ENCODE measurements at regions of chr17 and their contacts with region 1.

Region 1: GRCh38 chr17:50661795-50662391 is 27.2 kb downstream of the ABCC3 start:
- DNase-seq: peak; percentile 72 to 89 (median 88)
- H3K4me3 ChIP-seq: peak overlapping the region in 3 of 7 experiments; percentile 0 to 45 (median 26)
- H3K27ac ChIP-seq: peak overlapping the region in 1 of 2 experiments; percentile 52
- H3K4me1 ChIP-seq: peaks cover 0 to 48% (median 26%) of the 10 kb centered on the region in 4 experiments
- H3K27me3 ChIP-seq: no peaks in the 10 kb centered on the region

Region 2: GRCh38 chr17:50651661-50652060 is 10.2 kb before region 1 on chr17:
- CTCF ChIA-PET with region 1: interaction called, 13 read pairs
- POLR2A ChIA-PET with region 1: no interaction called
- DNase-seq: no peak
- H3K4me3 ChIP-seq: no peak overlapping the region
- H3K27ac ChIP-seq: no peak overlapping the region
- H3K4me1 ChIP-seq: no peaks in the 10 kb centered on the region
- H3K27me3 ChIP-seq: no peaks in the 10 kb centered on the region

Region 3: DNA sequence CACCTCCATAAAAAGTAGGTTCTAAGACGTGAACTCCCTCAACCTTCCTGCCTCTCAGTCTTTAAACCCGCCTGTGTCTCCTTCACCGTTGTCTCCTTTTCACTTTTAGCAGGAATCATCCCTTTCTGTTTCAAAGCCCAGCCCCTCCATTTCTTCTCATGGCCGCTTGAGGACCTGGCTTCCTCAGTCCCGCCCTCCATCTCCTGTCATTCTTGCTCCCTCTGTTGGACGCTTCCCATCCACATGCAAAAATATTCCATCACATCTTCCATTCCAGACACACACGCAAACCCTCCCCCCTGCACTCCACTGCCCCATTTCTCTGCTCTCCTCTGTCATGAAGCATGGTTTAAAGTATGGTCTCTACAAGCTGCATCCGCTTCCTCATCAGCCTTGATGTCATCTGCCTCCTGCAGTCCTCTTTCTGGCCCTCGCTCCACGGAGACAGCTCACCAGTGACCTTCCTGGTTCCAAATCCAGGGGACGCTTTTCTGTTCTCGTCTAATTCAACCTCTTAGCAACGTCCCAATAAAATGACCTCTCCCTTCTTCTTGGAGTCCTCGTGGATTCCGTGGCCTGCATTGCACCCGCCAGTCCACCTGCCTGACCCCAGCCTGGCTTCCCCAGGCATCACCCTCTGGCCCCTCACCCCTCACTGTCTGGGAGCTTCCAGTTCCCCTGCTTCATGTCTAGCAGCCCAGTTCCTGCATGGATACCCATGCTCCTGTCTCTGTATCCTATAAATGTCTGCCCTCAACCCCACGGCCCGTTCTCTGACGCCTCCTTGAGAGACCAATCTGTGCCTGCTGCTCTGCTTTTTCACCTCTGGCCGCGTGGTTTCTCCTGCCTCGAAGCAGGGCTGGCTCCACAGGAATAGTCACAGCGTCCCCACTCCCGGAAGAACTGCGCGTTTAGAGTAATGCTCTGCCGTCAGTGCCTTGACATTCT is 19.6 kb after region 1 on chr17:
- CTCF ChIA-PET with region 1: interaction called, 12 read pairs
- POLR2A ChIA-PET with region 1: no interaction called
- DNase-seq: peak; percentile 72 to 82 (median 80)
- H3K4me3 ChIP-seq: peak overlapping the region in 4 of 7 experiments; percentile 14 to 59 (median 42)
- H3K27ac ChIP-seq: no peak overlapping the region
- H3K4me1 ChIP-seq: peaks cover 0 to 7% (median 3%) of the 10 kb centered on the region in 4 experiments
- H3K27me3 ChIP-seq: peaks cover 0 to 9% (median 0%) of the 10 kb centered on the region in 5 experiments